Mammary epithelial cell (primary cell): ENCODE measurements at regions of chr12 and their contacts with region 1.

Region 1: DNA sequence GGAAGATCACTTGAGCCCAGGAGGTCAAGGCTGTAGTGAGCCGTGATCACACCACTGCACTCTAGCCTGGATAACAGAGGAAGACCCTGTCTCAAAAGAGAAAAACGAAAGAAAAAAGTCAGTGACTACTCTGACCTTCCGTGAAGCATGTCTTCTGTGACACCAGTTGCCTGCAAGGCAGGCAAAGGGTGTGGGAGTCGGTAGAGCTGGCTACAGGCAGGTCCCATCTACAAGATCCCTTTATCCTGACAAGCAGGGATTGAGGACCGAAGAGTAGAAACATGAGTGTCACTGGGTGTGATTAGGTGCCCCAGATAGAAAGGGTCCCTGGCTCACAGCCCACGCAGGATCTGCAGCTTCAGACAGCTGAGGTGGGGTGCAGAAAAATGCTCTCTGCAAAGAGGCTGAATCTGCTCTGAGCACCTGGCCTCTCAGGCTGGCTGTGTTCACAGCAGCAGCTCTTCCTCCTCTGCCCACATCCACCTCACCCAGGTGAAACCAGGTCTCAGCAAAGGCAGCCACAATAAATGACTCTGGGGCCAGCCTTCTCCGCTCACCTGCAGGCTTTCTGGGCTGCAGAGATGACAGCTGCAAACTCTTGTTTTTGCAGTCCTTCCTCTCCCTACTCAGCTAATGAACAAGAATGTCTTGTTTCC is 28.6 kb upstream of the HSP90B1 start:
- DNase-seq: no peak
- H3K4me3 ChIP-seq: no peak overlapping the region
- H3K27ac ChIP-seq: no peak overlapping the region
- H3K4me1 ChIP-seq: peaks cover 10% of the 10 kb centered on the region
- H3K27me3 ChIP-seq: no peaks in the 10 kb centered on the region
- CTCF ChIP-seq: no peak

Region 2: DNA sequence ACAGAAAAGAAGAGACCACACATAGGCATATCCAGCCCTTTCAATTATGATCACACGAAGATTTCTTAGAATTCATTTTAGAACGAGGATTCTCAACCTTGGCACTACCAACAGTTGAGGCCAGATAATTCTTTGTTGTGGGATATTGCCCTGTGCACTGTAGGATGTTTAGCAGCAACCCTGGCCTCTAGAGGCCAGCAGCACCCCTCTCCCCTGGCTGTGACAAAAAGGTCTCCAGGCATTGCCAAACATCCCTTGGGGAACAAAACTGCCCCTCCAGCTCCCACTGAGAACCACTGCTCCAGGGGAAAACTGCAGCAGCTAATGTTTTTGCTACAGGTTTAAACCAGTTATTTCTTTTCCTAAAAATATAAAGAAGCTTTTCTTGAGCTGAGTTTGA is 67.8 kb before region 1 on chr12:
- CTCF ChIA-PET with region 1: no interaction called
- dilution Hi-C with region 1: loop called (anchors 5 kb)
- in situ Hi-C with region 1: no loop called
- intact Hi-C with region 1: no loop called
- DNase-seq: no peak
- H3K4me3 ChIP-seq: no peak overlapping the region
- H3K27ac ChIP-seq: no peak overlapping the region
- H3K4me1 ChIP-seq: peaks cover 20% of the 10 kb centered on the region
- H3K27me3 ChIP-seq: no peaks in the 10 kb centered on the region
- CTCF ChIP-seq: peak in 1 of 2 donors; percentile 36